GM12878 (cell line): ENCODE measurements at regions of chr14 and their contacts with region 1.

Region 1: DNA sequence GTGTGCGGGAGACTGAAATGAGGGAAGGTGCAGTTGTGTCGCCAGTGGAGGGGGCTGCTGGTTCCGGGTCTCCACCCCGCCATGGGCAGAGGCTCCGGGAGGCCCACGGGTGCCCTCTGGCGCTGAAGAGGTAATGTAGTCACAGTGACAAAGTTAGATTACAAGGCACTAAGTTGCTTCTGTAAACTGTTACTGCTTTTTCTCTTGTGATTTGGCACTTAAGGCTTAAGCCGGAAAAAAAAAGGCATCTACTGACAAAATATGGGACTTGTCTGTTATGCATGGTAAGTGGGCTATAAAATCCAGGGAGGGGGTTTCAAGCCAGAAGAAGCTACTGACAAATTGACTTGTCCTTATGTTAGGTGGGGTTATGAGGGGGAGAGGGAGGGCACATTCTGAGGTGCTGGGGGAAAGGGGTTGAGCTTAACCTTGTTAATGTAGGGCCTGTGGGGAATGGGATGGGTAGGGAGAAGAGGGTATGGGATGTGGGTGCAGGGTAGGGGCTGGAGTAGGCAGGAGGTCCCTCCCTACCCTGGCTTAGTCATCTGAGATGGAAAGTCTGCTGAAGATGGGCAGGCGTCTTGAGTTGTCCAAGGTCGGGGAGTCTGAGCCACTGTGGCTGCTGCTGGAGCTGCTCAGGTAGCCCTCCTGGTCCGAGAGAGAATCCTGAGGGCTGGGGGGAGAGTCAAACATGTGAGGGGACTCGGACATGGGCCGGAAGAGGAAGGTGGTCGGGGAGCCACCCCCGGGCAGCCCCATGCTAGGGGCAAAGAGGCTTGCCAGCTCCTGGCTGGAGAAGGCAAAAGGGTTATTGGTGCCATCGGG is 3.7 kb downstream of the ZFP36L1 start:
- DNase-seq: no peak
- ATAC-seq: peak; percentile 39
- H3K4me3 ChIP-seq: peak overlapping the region; percentile 97
- H3K27ac ChIP-seq: peak overlapping the region; percentile 100
- H3K4me1 ChIP-seq: peaks cover 32% of the 10 kb centered on the region
- H3K27me3 ChIP-seq: no peaks in the 10 kb centered on the region
- CTCF ChIP-seq: peak; percentile 76 to 93 (median 85); a peak in 5 of 6 replicates
- EP300 ChIP-seq: no peak
- POLR2A ChIP-seq: peak; percentile 77
- RAD21 ChIP-seq: peak; percentile 80

Region 2: GRCh38 chr14:68274725-68275124 is 514.5 kb before region 1 on chr14:
- CTCF ChIA-PET with region 1: interaction called, 9 read pairs
- POLR2A ChIA-PET with region 1: interaction called, 7 read pairs
- RAD21 ChIA-PET with region 1: interaction called, 17 read pairs
- SMC1A ChIA-PET with region 1: interaction called, 6 read pairs
- in situ Hi-C with region 1: loop called (anchors 10 kb)
- intact Hi-C with region 1: no loop called
- DNase-seq: no peak
- ATAC-seq: no peak
- H3K4me3 ChIP-seq: no peak overlapping the region
- H3K27ac ChIP-seq: peak overlapping the region; percentile 91
- H3K4me1 ChIP-seq: peaks cover 78% of the 10 kb centered on the region
- H3K27me3 ChIP-seq: no peaks in the 10 kb centered on the region
- CTCF ChIP-seq: peak in 1 of 3 experiments; percentile 22; a peak in 1 of 6 replicates
- EP300 ChIP-seq: no peak
- POLR2A ChIP-seq: no peak
- RAD21 ChIP-seq: 0 out of 2 replicates have a peak, but pooled peaks have one; percentile 21

Region 3: DNA sequence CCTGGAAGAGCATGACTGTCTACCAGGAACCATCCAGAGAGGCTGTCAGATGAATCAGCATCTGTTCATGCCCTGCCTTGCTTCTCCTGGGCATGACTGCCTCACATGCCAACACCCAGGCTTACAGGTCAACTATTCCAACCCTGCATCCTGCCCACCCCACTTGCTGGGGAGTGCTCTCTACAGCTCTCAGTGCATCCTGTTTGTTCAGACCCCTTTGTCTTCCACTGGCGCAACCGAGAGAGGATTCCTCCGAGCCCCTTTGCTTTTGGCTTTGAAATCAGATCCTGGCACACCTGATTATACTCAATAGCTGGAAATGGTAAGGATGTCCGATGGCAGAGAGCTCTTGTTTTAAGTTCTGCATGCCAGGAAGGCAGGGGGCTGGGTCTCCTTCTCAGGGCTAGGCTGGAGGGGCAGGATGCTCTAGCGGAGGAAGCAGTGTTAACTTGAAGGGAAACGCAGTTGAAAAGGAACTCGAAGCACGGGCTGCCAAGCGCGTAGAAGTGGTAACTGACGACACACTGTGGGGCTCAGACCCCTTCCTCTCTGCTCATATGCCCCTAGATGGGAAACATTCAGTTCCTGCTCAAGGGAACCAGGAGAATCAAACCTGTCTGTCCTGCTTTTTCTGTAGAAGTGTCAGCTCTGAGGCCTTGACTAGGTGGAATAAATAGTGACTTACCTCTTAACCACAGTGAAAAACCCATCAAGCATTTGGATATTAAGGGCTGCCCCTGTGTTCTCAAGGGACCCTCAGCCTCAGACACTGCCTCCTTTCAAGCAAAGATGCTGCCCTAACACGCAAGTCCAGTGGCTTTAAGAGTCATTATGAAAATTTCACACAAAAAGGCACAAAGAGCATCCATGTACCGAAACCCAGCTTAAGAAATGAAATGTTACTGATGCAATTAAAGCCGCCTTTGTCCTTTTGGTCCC is 293.8 kb before region 1 on chr14:
- CTCF ChIA-PET with region 1: interaction called, 3 read pairs
- POLR2A ChIA-PET with region 1: no interaction called
- RAD21 ChIA-PET with region 1: interaction called, 3 read pairs
- SMC1A ChIA-PET with region 1: interaction called, 3 read pairs
- in situ Hi-C with region 1: no loop called
- intact Hi-C with region 1: loop called (anchors 5 kb)
- DNase-seq: peak; percentile 83
- ATAC-seq: peak; percentile 92
- H3K4me3 ChIP-seq: no peak overlapping the region
- H3K27ac ChIP-seq: peak overlapping the region; percentile 68
- H3K4me1 ChIP-seq: peaks cover 24% of the 10 kb centered on the region
- H3K27me3 ChIP-seq: no peaks in the 10 kb centered on the region
- CTCF ChIP-seq: no peak
- EP300 ChIP-seq: peak; percentile 71 to 87; a peak in 2 of 4 replicates
- POLR2A ChIP-seq: no peak
- RAD21 ChIP-seq: 0 out of 2 replicates have a peak, but pooled peaks have one; percentile 8

Region 4: GRCh38 chr14:68685419-68686204 is 103.6 kb before region 1 on chr14:
- CTCF ChIA-PET with region 1: interaction called, 5 read pairs
- POLR2A ChIA-PET with region 1: interaction called, 6 read pairs
- RAD21 ChIA-PET with region 1: interaction called, 13 read pairs
- SMC1A ChIA-PET with region 1: interaction called, 10 read pairs
- in situ Hi-C with region 1: no loop called
- intact Hi-C with region 1: loop called (anchors 2 kb)
- DNase-seq: peak; percentile 89
- ATAC-seq: peak; percentile 90
- H3K4me3 ChIP-seq: no peak overlapping the region
- H3K27ac ChIP-seq: peak overlapping the region; percentile 67
- H3K4me1 ChIP-seq: peaks cover 48% of the 10 kb centered on the region
- H3K27me3 ChIP-seq: no peaks in the 10 kb centered on the region
- CTCF ChIP-seq: no peak
- EP300 ChIP-seq: peak in 1 of 2 experiments; percentile 85; a peak in 3 of 4 replicates
- POLR2A ChIP-seq: peak; percentile 62
- RAD21 ChIP-seq: 0 out of 2 replicates have a peak, but pooled peaks have one; percentile 0

Region 5: GRCh38 chr14:68824517-68825347 is 35.5 kb after region 1 on chr14:
- CTCF ChIA-PET with region 1: interaction called, 254 read pairs
- POLR2A ChIA-PET with region 1: interaction called, 115 read pairs
- RAD21 ChIA-PET with region 1: interaction called, 244 read pairs
- SMC1A ChIA-PET with region 1: interaction called, 200 read pairs
- in situ Hi-C with region 1: no loop called
- intact Hi-C with region 1: no loop called
- DNase-seq: no peak
- ATAC-seq: peak; percentile 10; the same call in 1 of the 3 replicates
- H3K4me3 ChIP-seq: no peak overlapping the region
- H3K27ac ChIP-seq: no peak overlapping the region; the same call in 1 of the 2 replicates
- H3K4me1 ChIP-seq: peaks cover 50% of the 10 kb centered on the region
- H3K27me3 ChIP-seq: no peaks in the 10 kb centered on the region
- CTCF ChIP-seq: peak; percentile 90 to 93 (median 90)
- EP300 ChIP-seq: no peak
- POLR2A ChIP-seq: no peak
- RAD21 ChIP-seq: peak; percentile 64; the same call in 1 of the 2 replicates

Region 6: DNA sequence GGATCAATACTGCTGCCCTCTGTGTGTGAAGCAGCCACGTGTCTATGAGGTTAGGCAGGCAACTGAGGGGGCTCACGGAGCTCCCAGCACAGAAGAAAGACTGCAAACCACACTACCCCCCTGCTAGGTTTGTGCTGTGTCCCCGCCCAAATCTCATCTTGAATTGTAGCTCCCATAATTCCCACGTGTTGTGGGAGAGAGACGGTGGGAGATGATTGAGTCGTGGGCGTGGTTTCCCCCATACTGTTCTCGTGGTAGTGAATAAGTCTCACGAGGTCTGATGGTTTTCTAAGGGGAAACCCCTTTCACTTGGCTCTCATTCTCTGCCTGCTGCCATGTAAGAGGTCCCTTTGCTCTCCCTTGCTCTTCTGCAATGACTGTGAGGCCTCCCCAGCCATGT is 121.3 kb after region 1 on chr14:
- CTCF ChIA-PET with region 1: no interaction called
- POLR2A ChIA-PET with region 1: no interaction called
- RAD21 ChIA-PET with region 1: no interaction called
- SMC1A ChIA-PET with region 1: no interaction called
- in situ Hi-C with region 1: no loop called
- intact Hi-C with region 1: no loop called
- DNase-seq: no peak
- ATAC-seq: peak; percentile 54
- H3K4me3 ChIP-seq: no peak overlapping the region
- H3K27ac ChIP-seq: no peak overlapping the region
- H3K4me1 ChIP-seq: no peaks in the 10 kb centered on the region
- H3K27me3 ChIP-seq: no peaks in the 10 kb centered on the region
- CTCF ChIP-seq: no peak
- EP300 ChIP-seq: no peak
- POLR2A ChIP-seq: no peak
- RAD21 ChIP-seq: no peak

Region 7: DNA sequence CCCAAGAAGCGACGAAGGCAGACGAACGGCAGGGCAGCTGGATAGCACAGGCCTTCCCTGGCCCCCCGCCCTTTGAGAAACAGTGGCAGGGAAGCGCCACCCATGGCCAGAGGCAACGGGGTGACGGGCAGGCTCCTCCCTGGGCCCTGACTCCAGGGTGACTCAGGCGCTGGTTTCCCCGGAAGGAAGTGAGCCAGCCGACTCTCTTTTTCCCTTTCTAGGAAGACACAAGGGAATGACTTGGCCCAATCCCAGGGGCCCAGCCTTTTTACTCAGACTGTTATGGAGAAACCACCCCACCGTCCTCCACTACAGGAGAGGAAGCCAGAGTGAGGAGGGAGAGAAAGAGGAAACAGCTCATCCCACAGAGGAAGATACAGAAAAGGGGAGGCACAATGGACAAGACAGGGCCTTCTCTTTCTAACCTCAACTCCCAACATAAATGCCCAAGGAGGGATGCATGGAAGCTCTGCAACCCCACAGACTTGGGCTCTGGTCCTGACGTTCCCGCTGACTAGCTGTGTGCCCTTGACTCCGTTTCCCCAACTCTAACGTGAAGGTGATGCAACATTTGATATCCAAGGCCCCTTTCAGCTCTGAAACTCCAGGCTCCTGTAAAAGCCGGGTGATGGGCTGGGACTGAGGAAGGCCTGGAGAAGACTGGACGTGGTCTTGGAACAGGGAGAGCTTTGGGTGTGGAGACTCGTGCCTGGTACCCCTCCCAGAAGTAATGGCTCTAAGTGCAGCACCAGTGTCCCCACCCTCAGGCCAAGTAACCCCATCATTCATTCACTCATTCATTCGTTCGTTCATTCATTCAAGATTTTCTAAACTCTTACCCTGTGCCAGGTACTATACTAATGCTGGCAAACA is 162.1 kb after region 1 on chr14:
- CTCF ChIA-PET with region 1: no interaction called
- POLR2A ChIA-PET with region 1: no interaction called
- RAD21 ChIA-PET with region 1: no interaction called
- SMC1A ChIA-PET with region 1: no interaction called
- in situ Hi-C with region 1: no loop called
- intact Hi-C with region 1: no loop called
- DNase-seq: no peak
- ATAC-seq: no peak
- H3K4me3 ChIP-seq: no peak overlapping the region
- H3K27ac ChIP-seq: no peak overlapping the region
- H3K4me1 ChIP-seq: peaks cover 9% of the 10 kb centered on the region; the same call in 1 of the 2 replicates
- H3K27me3 ChIP-seq: no peaks in the 10 kb centered on the region
- CTCF ChIP-seq: no peak
- EP300 ChIP-seq: no peak
- POLR2A ChIP-seq: no peak
- RAD21 ChIP-seq: no peak